T-cell (primary cell): ENCODE measurements at regions of chr6 and their contacts with region 1.

Region 1: DNA sequence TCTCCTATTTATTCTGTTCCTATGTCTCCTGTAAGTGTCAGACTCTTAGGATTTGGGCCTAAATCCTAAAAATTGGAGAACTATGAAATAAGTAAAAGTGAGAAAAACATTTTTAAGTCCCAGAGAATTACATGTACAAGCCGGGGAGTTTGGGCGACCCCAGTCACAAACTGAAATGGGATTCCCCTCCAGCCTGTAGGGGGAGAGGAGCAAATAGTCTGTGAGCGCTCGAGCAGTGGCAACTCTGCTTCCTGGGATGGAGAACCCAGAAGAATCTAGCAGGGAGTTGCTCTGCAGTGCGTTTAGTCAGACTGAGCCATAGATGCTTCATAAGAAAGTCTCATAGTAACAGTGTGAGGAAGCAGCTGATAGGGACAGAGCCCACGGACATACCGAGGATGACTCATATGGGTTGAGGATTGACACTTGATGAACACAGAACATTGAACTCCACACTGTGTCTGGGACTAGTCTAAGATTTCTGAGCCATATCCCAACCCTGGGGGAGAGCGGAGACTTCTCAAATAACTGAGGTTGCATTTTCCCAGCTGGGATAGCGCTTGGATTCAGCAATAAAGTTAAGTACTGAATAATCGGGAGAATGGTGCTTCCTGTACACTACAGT is 437.2 kb downstream of the BCKDHB start:
- DNase-seq: no peak
- ATAC-seq: no peak
- H3K4me3 ChIP-seq: no peak overlapping the region
- H3K4me3 Mint-ChIP-seq: no peak overlapping the region
- H3K27ac ChIP-seq: no peak overlapping the region
- H3K27ac Mint-ChIP-seq: no peak overlapping the region
- H3K4me1 ChIP-seq: no peaks in the 10 kb centered on the region
- H3K4me1 Mint-ChIP-seq: no peaks in the 10 kb centered on the region
- H3K27me3 ChIP-seq: peaks cover 0 to 2% of the 10 kb centered on the region in 2 experiments
- H3K27me3 Mint-ChIP-seq: peaks cover 4 to 12% of the 10 kb centered on the region in 2 donors

Region 2: DNA sequence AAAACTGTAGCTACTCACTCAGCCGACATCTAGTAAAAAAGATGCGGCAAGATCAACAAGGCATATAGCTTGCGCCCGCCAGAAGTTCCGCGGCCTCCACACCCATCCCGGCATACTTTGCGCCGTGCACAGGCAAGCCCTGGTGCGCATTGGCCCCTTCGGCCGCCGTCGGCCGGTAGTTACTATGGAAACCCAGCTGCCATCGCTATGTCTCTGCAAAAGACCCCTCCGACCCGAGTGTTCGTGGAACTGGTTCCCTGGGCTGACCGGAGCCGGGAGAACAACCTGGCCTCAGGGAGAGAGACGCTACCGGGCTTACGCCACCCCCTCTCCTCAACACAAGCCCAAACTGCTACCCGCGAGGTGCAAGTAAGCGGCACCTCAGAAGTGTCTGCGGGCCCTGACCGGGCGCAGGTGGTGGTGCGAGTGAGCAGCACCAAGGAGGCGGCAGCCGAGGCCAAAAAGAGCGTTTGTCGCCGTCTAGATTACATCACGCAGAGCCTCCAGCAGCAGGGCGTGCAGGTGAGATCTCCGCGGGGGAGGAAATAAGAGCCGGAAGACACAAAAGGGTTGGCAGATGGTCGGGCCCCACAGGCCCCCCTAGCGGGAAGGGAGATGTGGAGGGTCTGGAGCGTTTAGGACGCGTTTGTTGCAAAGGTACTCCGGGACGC is 1676.2 kb before region 1 on chr6 and contains the start of gene IRAK1BP1:
- CTCF ChIA-PET with region 1: no interaction called
- POLR2A ChIA-PET with region 1: no interaction called
- DNase-seq: peak; percentile 42 to 79 (median 65)
- ATAC-seq: peak; percentile 91 to 95 (median 93)
- H3K4me3 ChIP-seq: peak within 1 kb of the TSS; percentile 82 to 89
- H3K4me3 Mint-ChIP-seq: peak within 1 kb of the TSS; percentile 92 to 99 (median 97)
- H3K27ac ChIP-seq: peak within 1 kb of the TSS; percentile 68
- H3K27ac Mint-ChIP-seq: peak within 1 kb of the TSS; percentile 93 to 96
- H3K4me1 ChIP-seq: peaks cover 2 to 12% of the 10 kb centered on the region in 2 experiments
- H3K4me1 Mint-ChIP-seq: peaks cover 19 to 26% (median 25%) of the 10 kb centered on the region in 3 donors
- H3K27me3 ChIP-seq: no peaks in the 10 kb centered on the region
- H3K27me3 Mint-ChIP-seq: no peaks in the 10 kb centered on the region
- total RNA-seq, gene IRAK1BP1: 2.1 to 5.5 (median 4.4) TPM

Region 3: DNA sequence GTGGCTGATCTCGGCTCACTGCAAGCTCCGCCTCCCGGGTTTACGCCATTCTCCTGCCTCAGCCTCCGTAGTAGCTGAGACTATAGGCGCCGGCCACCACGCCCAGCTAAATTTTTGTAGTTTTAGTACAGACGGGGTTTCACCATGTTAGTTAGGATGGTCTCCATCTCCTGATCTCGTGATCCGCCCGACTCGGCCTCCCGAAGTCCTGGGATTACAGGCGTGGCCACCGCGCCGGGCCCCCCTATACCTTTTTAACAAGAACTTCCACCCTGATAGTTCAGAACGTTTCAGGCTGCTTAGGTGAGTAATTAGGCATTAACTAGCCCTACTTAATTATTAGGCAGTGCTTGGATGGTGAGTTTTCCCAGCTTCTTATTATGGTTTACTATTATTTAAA is 115.2 kb after region 1 on chr6:
- CTCF ChIA-PET with region 1: no interaction called
- POLR2A ChIA-PET with region 1: no interaction called
- DNase-seq: no peak
- ATAC-seq: no peak
- H3K4me3 ChIP-seq: no peak overlapping the region
- H3K4me3 Mint-ChIP-seq: no peak overlapping the region
- H3K27ac ChIP-seq: no peak overlapping the region
- H3K27ac Mint-ChIP-seq: no peak overlapping the region
- H3K4me1 ChIP-seq: no peaks in the 10 kb centered on the region
- H3K4me1 Mint-ChIP-seq: no peaks in the 10 kb centered on the region
- H3K27me3 ChIP-seq: no peaks in the 10 kb centered on the region
- H3K27me3 Mint-ChIP-seq: no peaks in the 10 kb centered on the region

Region 4: GRCh38 chr6:81031416-81031815 is 487.7 kb after region 1 on chr6:
- CTCF ChIA-PET with region 1: no interaction called
- POLR2A ChIA-PET with region 1: interaction called in 1 of 2 experiments, 17 read pairs
- DNase-seq: no peak
- ATAC-seq: no peak
- H3K4me3 ChIP-seq: no peak overlapping the region
- H3K4me3 Mint-ChIP-seq: no peak overlapping the region
- H3K27ac ChIP-seq: no peak overlapping the region
- H3K27ac Mint-ChIP-seq: no peak overlapping the region
- H3K4me1 ChIP-seq: no peaks in the 10 kb centered on the region
- H3K4me1 Mint-ChIP-seq: no peaks in the 10 kb centered on the region
- H3K27me3 ChIP-seq: no peaks in the 10 kb centered on the region
- H3K27me3 Mint-ChIP-seq: no peaks in the 10 kb centered on the region